GM23248 (cell line): ENCODE measurements at regions of chr3 and their contacts with region 1.

Region 1: GRCh38 chr3:196609343-196609775 is 30.1 kb upstream of the NRROS start:
- DNase-seq: peak; percentile 87
- H3K4me3 ChIP-seq: no peak overlapping the region
- H3K27ac ChIP-seq: no peak overlapping the region
- H3K4me1 ChIP-seq: no peaks in the 10 kb centered on the region
- H3K27me3 ChIP-seq: no peaks in the 10 kb centered on the region; the same call in 1 of the 2 replicates

Region 2: GRCh38 chr3:196684548-196685407 is 75.4 kb after region 1 on chr3:
- in situ Hi-C with region 1: loop called (anchors 5 kb)
- DNase-seq: peak; percentile 72
- H3K4me3 ChIP-seq: no peak overlapping the region
- H3K27ac ChIP-seq: no peak overlapping the region
- H3K4me1 ChIP-seq: peaks cover 16% of the 10 kb centered on the region
- H3K27me3 ChIP-seq: peaks cover 5% of the 10 kb centered on the region; the same call in 1 of the 2 replicates